OCI-LY7 (cell line): ENCODE measurements at regions of chr11 and their contacts with region 1.

Region 1: DNA sequence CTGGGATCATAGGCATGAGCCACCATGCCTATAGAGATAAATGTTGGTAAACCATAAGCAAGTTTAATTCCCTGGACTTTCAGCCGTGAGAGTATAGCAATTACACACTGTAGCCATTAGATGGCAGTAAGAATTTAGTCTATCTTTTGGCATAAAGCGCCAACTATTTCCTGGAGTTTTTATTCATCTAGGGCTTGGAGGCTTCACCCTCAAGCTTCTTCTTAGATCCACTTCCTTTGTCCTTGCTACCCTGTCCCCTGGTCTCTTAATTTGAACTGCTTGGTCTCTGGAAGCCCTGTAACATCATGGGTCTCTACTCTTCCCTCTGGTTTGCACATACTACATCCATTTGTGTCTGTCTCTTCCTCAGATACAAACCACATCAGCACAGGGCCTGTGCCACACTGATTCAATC is 38.2 kb downstream of the OR10A6 start:
- DNase-seq: peak; percentile 84
- H3K4me3 ChIP-seq: peak overlapping the region; percentile 32
- H3K27ac ChIP-seq: peak overlapping the region; percentile 74
- H3K4me1 ChIP-seq: peaks cover 43% of the 10 kb centered on the region
- CTCF ChIP-seq: peak; percentile 91

Region 2: DNA sequence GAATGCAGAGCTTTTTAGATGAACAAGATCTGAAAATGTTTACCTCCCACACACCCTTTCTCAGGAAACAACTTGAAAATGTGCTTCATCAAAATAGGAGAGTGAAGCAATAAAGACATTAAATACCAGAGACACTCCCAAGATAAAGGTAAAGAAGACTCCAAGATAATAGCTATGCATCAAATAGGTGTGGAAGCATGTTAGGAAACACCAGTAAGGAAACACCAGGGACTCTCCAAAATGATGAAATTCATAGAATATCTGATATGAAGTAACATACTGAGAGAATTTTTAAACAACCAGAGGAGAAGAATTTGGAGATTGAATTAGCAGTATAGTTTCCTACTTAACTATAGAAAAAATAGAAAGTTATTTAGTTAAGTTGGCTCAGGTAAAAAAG is 18.8 kb before region 1 on chr11:
- CTCF ChIA-PET with region 1: no interaction called
- POLR2A ChIA-PET with region 1: interaction called, 16 read pairs
- intact Hi-C with region 1: no loop called
- DNase-seq: no peak
- H3K4me3 ChIP-seq: no peak overlapping the region
- H3K27ac ChIP-seq: no peak overlapping the region
- H3K4me1 ChIP-seq: peaks cover 14% of the 10 kb centered on the region
- CTCF ChIP-seq: no peak

Region 3: GRCh38 chr11:7945291-7945690 is 52.4 kb after region 1 on chr11:
- CTCF ChIA-PET with region 1: no interaction called
- POLR2A ChIA-PET with region 1: no interaction called
- intact Hi-C with region 1: no loop called
- DNase-seq: no peak
- H3K4me3 ChIP-seq: no peak overlapping the region
- H3K27ac ChIP-seq: no peak overlapping the region
- H3K4me1 ChIP-seq: no peaks in the 10 kb centered on the region
- CTCF ChIP-seq: no peak

Region 4: DNA sequence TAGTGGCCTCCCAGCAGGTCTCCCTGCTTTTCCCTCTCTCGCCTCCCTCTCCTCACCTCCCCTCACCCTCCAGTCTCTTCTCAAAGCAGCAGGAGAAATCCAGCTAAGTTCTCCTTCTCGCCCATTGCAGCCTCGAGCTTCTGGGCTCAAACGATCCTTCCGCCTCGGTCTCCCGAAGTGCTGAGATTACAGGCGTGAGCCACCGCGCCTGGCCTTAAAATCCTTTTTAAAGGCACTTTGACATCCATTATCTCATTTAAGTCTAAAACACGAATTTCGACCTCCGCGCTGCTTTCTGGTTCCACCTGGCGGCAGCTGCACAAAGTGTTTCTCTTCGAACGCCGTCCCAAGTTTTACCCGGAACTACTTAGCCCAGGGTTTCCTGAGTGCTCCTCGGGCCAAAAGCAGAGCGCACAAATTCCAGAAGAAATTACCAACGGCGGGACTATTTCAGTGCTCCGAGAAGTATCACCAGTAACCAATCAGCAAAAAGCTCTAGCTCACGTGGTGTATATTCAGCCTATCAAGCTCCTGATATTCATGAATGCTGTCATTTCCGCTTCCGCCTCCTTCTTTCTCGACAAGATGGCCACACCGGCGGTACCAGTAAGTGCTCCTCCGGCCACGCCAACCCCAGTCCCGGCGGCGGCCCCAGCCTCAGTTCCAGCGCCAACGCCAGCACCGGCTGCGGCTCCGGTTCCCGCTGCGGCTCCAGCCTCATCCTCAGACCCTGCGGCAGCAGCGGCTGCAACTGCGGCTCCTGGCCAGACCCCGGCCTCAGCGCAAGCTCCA is 94.1 kb after region 1 on chr11 and contains the start of gene EIF3F:
- CTCF ChIA-PET with region 1: interaction called, 42 read pairs
- POLR2A ChIA-PET with region 1: interaction called, 26 read pairs
- intact Hi-C with region 1: loop called (anchors 1 kb)
- DNase-seq: peak; percentile 99
- H3K4me3 ChIP-seq: peak within 1 kb of the TSS; percentile 96
- H3K27ac ChIP-seq: peak within 1 kb of the TSS; percentile 57
- H3K4me1 ChIP-seq: peaks cover 27% of the 10 kb centered on the region
- CTCF ChIP-seq: peak; percentile 89
- total RNA-seq, gene EIF3F: 239 and 376 TPM in 2 replicates

Region 5: DNA sequence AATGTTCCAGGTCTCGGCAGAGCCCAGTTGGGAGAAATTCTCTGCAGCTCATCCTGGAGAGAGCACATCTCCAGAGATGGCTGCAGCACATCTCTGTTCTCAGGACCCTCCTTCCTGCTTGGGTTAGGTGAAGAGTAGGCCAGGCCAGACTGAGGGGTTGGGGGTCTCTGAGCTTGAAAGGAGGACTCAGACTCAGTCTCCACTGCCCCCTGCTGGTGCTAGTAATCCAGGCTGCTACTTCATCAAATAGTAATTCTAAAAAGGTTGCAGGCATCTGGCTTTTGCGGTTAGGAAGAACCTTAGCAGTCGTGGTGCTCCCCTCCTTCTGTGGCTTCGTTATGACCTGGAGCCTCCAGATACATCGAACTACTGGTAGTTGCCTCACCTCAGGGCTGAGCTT is 197.9 kb after region 1 on chr11:
- CTCF ChIA-PET with region 1: no interaction called
- POLR2A ChIA-PET with region 1: interaction called, 3 read pairs
- intact Hi-C with region 1: loop called (anchors 2 kb)
- DNase-seq: peak; percentile 51
- H3K4me3 ChIP-seq: no peak overlapping the region
- H3K27ac ChIP-seq: no peak overlapping the region
- H3K4me1 ChIP-seq: peaks cover 5% of the 10 kb centered on the region
- CTCF ChIP-seq: peak; percentile 75

Region 6: GRCh38 chr11:8099291-8099899 is 206.5 kb after region 1 on chr11:
- CTCF ChIA-PET with region 1: no interaction called
- POLR2A ChIA-PET with region 1: no interaction called
- intact Hi-C with region 1: loop called (anchors 2 kb)
- DNase-seq: peak; percentile 70
- H3K4me3 ChIP-seq: no peak overlapping the region
- H3K27ac ChIP-seq: no peak overlapping the region
- H3K4me1 ChIP-seq: no peaks in the 10 kb centered on the region
- CTCF ChIP-seq: peak; percentile 95